B cell (primary cell): ENCODE measurements at regions of chr13 and their contacts with region 1.

Region 1: DNA sequence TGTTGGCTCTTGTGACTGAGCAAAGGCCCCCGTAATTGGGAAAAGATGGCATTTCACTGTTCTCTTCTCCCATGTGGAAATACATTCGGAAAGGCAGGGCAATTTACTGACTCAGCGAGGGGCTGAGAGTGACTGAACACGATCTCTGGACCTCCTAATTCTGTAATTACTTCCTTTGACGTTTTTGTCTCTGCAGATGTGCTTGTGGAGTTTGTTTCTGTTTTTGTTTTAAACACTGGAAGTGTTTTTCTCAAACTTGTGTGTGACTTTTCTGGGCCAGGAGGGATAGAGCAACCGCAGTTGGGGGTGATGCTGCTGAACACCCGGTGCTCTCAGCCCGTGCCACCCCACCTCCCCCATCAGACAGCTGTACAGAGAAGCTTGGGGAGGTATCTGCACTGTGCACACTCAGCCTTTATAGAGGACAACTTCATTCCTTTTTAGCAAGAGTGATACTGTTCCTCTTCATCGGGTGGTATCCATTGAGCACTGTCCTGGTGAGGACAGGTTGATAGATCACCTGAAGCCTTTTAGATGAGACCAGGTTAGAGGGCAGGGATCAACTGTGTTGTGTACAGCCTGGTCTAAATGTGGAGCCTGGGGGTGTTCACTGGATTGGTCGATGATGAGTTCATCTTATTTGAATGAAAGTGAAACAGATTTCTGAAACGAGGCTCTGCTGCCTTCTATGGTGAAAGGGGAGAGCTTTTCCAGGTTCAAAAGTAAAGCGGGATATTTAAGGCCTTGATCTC is 117.4 kb downstream of the ESD start:
- DNase-seq: peak; percentile 78
- ATAC-seq: peak; percentile 89
- H3K4me3 ChIP-seq: peak overlapping the region in 4 of 5 experiments; percentile 23 to 63 (median 44)
- H3K4me3 Mint-ChIP-seq: no peak overlapping the region
- H3K27ac ChIP-seq: peak overlapping the region; percentile 79 to 81
- H3K27ac Mint-ChIP-seq: no peak overlapping the region
- H3K4me1 ChIP-seq: peaks cover 23 to 27% of the 10 kb centered on the region in 2 donors
- H3K4me1 Mint-ChIP-seq: peaks cover 26% of the 10 kb centered on the region
- H3K27me3 ChIP-seq: no peaks in the 10 kb centered on the region
- H3K27me3 Mint-ChIP-seq: no peaks in the 10 kb centered on the region
- CTCF ChIP-seq: peak; percentile 43

Region 2: GRCh38 chr13:46369506-46370277 is 309.9 kb before region 1 on chr13:
- CTCF ChIA-PET with region 1: no interaction called
- POLR2A ChIA-PET with region 1: no interaction called
- intact Hi-C with region 1: no loop called
- DNase-seq: peak; percentile 65
- ATAC-seq: peak; percentile 48
- H3K4me3 ChIP-seq: peak overlapping the region; percentile 13 to 56 (median 42)
- H3K4me3 Mint-ChIP-seq: peak overlapping the region; percentile 78
- H3K27ac ChIP-seq: peak overlapping the region; percentile 59 to 84
- H3K27ac Mint-ChIP-seq: peak overlapping the region; percentile 82
- H3K4me1 ChIP-seq: peaks cover 68 to 73% of the 10 kb centered on the region in 2 donors
- H3K4me1 Mint-ChIP-seq: peaks cover 81% of the 10 kb centered on the region
- H3K27me3 ChIP-seq: no peaks in the 10 kb centered on the region
- H3K27me3 Mint-ChIP-seq: no peaks in the 10 kb centered on the region
- CTCF ChIP-seq: no peak

Region 3: DNA sequence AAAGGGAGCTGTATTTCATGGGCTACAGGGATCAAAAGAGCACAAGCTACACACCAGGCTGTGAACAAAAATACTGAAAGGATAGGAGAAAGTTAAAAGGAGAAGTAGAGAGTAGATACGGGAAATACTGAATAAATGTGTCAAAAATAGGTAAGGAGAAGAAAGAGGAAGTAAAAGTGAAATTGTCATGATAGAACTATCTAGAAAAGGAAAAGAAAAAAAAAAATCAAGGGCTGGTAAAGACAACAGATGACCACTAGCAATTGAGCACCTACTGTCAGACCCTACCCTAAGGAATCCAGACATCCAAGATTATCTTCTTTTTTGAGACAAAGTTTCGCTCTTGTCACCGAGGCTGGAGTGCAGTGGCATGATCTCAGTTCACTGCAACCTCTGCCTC is 297.3 kb before region 1 on chr13:
- CTCF ChIA-PET with region 1: no interaction called
- POLR2A ChIA-PET with region 1: no interaction called
- intact Hi-C with region 1: no loop called
- DNase-seq: peak; percentile 77
- ATAC-seq: peak; percentile 46
- H3K4me3 ChIP-seq: peak overlapping the region; percentile 14 to 90 (median 74)
- H3K4me3 Mint-ChIP-seq: peak overlapping the region; percentile 73
- H3K27ac ChIP-seq: peak overlapping the region; percentile 84 to 97
- H3K27ac Mint-ChIP-seq: peak overlapping the region; percentile 90
- H3K4me1 ChIP-seq: peaks cover 66 to 72% of the 10 kb centered on the region in 2 donors
- H3K4me1 Mint-ChIP-seq: peaks cover 60% of the 10 kb centered on the region
- H3K27me3 ChIP-seq: no peaks in the 10 kb centered on the region
- H3K27me3 Mint-ChIP-seq: no peaks in the 10 kb centered on the region
- CTCF ChIP-seq: no peak

Region 4: DNA sequence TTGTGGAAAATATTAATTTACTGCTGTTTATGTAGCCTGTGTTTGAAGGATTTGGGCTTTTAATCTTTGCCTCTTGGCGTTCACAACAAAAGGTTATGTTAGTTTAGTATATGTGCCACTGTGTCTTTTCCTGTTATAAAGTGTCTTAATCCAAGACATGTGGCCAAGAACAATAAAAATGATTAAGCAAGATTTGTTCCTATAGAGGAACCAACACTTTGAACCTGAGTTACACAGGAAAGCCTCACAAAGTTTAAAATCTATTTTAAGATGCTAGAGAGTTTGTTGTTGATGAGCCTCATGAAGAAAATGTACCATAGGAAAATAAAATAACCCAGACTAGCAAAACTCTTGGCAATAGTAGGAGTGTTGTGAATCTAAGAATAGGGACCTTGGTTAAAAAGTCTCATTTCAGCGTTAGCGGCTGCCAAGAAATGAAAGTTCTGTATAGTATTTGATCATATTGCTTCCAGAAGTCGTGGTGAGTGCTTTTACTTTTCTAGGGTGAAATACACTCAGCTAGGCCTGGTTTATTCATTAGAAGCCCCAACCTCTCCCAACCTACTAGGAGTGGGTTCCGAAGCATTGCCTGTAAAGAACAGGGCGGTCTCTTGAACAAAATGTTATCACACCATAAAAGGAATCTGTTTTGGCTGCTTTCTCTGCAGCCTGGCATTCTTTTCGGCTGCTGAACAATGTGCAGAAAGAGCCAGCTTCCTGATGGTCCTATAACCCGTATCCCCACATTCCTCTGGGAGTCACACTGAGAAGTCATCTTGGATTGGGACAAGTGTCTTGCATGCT is 24.0 kb before region 1 on chr13:
- CTCF ChIA-PET with region 1: interaction called, 3 read pairs
- POLR2A ChIA-PET with region 1: no interaction called
- intact Hi-C with region 1: loop called (anchors 2 kb)
- DNase-seq: no peak
- ATAC-seq: no peak
- H3K4me3 ChIP-seq: peak overlapping the region in 1 of 5 experiments; percentile 9
- H3K4me3 Mint-ChIP-seq: peak overlapping the region; percentile 50
- H3K27ac ChIP-seq: peak overlapping the region; percentile 21 to 77
- H3K27ac Mint-ChIP-seq: peak overlapping the region; percentile 79
- H3K4me1 ChIP-seq: peaks cover 32 to 35% of the 10 kb centered on the region in 2 donors
- H3K4me1 Mint-ChIP-seq: peaks cover 51% of the 10 kb centered on the region
- H3K27me3 ChIP-seq: no peaks in the 10 kb centered on the region
- H3K27me3 Mint-ChIP-seq: no peaks in the 10 kb centered on the region
- CTCF ChIP-seq: no peak